ENCODE measurements at regions of chr11 and their contacts with region 1.

Region 1: GRCh38 chr11:84261707-84262106 is 975.5 kb upstream of the CCDC90B start:
- DNase-seq: no peak
- ATAC-seq: no peak
- H3K4me3 ChIP-seq: no peak overlapping the region
- H3K4me3 Mint-ChIP-seq: no peak overlapping the region
- H3K27ac ChIP-seq: no peak overlapping the region
- H3K27ac Mint-ChIP-seq: no peak overlapping the region
- H3K4me1 ChIP-seq: no peaks in the 10 kb centered on the region
- H3K4me1 Mint-ChIP-seq: no peaks in the 10 kb centered on the region
- H3K27me3 ChIP-seq: no peaks in the 10 kb centered on the region
- H3K27me3 Mint-ChIP-seq: no peaks in the 10 kb centered on the region
- CTCF ChIP-seq: no peak

Region 2: DNA sequence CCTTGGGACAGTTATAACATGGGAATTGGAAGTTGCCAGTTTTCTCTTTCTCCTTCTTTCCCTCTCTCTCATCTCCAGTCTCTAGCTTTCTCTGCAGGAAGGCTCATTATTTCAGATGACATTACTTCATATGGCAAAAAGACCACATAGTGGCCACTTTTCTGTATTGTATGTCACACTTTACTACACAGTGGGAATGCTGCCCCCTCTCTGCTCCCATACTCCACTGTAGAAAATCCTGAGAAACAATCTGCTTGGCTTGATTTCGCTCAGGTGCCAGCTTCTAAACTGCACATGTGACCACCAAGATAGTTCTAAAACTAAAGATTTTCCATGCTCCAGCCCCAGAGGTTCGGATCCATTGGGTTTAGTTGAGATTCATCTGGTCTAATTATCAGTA is 114.9 kb before region 1 on chr11:
- CTCF ChIA-PET with region 1: no interaction called
- POLR2A ChIA-PET with region 1: no interaction called
- intact Hi-C with region 1: no loop called
- DNase-seq: no peak
- ATAC-seq: no peak
- H3K4me3 ChIP-seq: no peak overlapping the region
- H3K4me3 Mint-ChIP-seq: no peak overlapping the region
- H3K27ac ChIP-seq: no peak overlapping the region
- H3K27ac Mint-ChIP-seq: no peak overlapping the region
- H3K4me1 ChIP-seq: no peaks in the 10 kb centered on the region
- H3K4me1 Mint-ChIP-seq: no peaks in the 10 kb centered on the region
- H3K27me3 ChIP-seq: no peaks in the 10 kb centered on the region
- H3K27me3 Mint-ChIP-seq: no peaks in the 10 kb centered on the region
- CTCF ChIP-seq: no peak

Region 3: GRCh38 chr11:84249344-84250136 is 12.2 kb before region 1 on chr11:
- CTCF ChIA-PET with region 1: no interaction called
- POLR2A ChIA-PET with region 1: no interaction called
- intact Hi-C with region 1: no loop called
- DNase-seq: no peak
- ATAC-seq: no peak
- H3K4me3 ChIP-seq: no peak overlapping the region
- H3K4me3 Mint-ChIP-seq: no peak overlapping the region
- H3K27ac ChIP-seq: no peak overlapping the region
- H3K27ac Mint-ChIP-seq: no peak overlapping the region
- H3K4me1 ChIP-seq: no peaks in the 10 kb centered on the region
- H3K4me1 Mint-ChIP-seq: no peaks in the 10 kb centered on the region
- H3K27me3 ChIP-seq: no peaks in the 10 kb centered on the region
- H3K27me3 Mint-ChIP-seq: no peaks in the 10 kb centered on the region
- CTCF ChIP-seq: no peak

Region 4: GRCh38 chr11:84316866-84317555 is 55.3 kb after region 1 on chr11:
- CTCF ChIA-PET with region 1: no interaction called
- POLR2A ChIA-PET with region 1: no interaction called
- intact Hi-C with region 1: loop called in 1 of 2 experiments (anchors 5 kb)
- DNase-seq: no peak
- ATAC-seq: no peak
- H3K4me3 ChIP-seq: no peak overlapping the region
- H3K4me3 Mint-ChIP-seq: no peak overlapping the region
- H3K27ac ChIP-seq: no peak overlapping the region
- H3K27ac Mint-ChIP-seq: no peak overlapping the region
- H3K4me1 ChIP-seq: no peaks in the 10 kb centered on the region
- H3K4me1 Mint-ChIP-seq: no peaks in the 10 kb centered on the region
- H3K27me3 ChIP-seq: no peaks in the 10 kb centered on the region
- H3K27me3 Mint-ChIP-seq: no peaks in the 10 kb centered on the region
- CTCF ChIP-seq: no peak

Measured in CD8-positive, alpha-beta T cell (primary cell).